Activated naive CD4-positive, alpha-beta T cell treated with anti-CD3 and anti-CD28 coated beads for 36 hours (primary cell): ENCODE measurements at regions of chr2 and their contacts with region 1.

Region 1: GRCh38 chr2:47520825-47521665 is 118.1 kb downstream of the MSH2 start:
- DNase-seq: peak; percentile 83
- H3K4me3 Mint-ChIP-seq: peak overlapping the region; percentile 82
- H3K27ac Mint-ChIP-seq: peak overlapping the region; percentile 72
- H3K4me1 Mint-ChIP-seq: peaks cover 10% of the 10 kb centered on the region
- H3K27me3 Mint-ChIP-seq: no peaks in the 10 kb centered on the region

Region 2: GRCh38 chr2:47751875-47752357 is 230.9 kb after region 1 on chr2:
- CTCF ChIA-PET with region 1: no interaction called
- intact Hi-C with region 1: loop called (anchors 5 kb)
- DNase-seq: no peak
- H3K4me3 Mint-ChIP-seq: no peak overlapping the region
- H3K27ac Mint-ChIP-seq: peak overlapping the region; percentile 69
- H3K4me1 Mint-ChIP-seq: peaks cover 9% of the 10 kb centered on the region
- H3K27me3 Mint-ChIP-seq: no peaks in the 10 kb centered on the region